Activated naive CD4-positive, alpha-beta T cell treated with anti-CD3 and anti-CD28 coated beads for 36 hours (primary cell): ENCODE measurements at regions of chr2 and their contacts with region 1.

Region 1: DNA sequence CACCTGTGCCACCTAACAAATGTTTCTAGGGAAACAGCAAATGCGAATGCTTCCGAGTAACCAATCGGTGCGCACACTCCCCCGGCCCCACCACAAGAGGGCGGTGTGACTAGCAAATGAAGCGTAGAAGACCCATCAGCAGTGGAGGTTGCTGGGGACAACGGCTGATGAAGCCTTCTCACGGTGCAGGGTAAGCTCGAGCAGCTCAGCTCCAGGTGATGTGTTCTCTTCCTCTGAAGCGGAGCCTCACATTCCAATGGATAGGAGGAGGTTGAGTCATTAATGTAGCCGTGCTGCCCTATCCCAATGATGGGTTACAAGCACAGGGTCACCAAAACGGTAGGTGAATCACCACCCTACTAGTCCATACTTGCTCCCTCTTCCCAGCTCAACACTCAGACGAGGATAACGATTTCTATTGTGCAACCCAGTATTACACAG is 127.6 kb upstream of the TWIST2 start:
- DNase-seq: peak; percentile 75
- H3K4me3 Mint-ChIP-seq: no peak overlapping the region
- H3K27ac Mint-ChIP-seq: no peak overlapping the region
- H3K4me1 Mint-ChIP-seq: no peaks in the 10 kb centered on the region
- H3K27me3 Mint-ChIP-seq: peaks cover 29% of the 10 kb centered on the region

Region 2: DNA sequence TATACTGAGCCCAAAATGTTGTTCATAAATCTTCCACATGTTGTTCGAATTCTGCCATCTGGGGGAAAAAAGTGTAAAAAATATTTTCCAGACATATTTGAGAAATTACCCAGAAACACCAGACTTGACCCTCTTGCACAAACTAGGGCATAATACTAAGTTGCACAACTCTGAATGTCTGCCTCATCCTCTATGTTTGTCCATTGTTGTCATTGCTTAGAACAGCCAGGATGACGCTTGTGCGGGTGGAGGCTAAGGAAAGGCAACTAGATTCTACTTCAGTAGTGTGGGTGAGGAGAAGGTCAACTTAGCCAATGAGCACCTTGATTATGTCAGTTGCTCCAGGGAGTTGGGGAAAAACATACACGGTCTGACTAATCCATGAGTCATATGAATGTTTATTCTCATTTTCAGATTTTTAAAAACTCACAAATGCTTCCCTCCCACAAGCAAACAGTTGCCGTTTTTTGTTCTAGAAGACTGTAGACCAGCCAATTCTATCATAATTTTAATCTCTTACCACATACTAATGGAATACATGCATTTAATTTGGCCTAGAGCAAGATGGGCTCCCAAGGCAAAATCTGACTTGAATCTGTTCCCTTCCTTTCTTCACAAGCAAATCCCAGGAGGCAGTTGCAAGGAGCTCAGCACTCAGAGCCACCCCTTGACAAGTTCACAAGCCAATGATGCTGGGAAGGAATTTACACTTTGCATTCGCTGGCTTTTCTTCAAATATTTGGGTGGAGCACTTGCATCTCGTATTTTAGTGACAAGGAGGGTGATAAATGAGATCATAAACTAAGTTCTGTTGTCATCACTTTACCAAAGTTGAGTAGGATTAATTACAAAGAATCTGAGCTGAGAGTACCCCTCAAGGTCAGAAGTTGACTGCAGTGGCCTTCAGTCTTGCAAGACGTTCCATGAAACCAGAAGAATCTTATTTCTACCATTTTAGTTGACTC is 35.6 kb before region 1 on chr2:
- CTCF ChIA-PET with region 1: no interaction called
- intact Hi-C with region 1: no loop called
- DNase-seq: peak; percentile 37
- H3K4me3 Mint-ChIP-seq: no peak overlapping the region
- H3K27ac Mint-ChIP-seq: no peak overlapping the region
- H3K4me1 Mint-ChIP-seq: peaks cover 13% of the 10 kb centered on the region
- H3K27me3 Mint-ChIP-seq: peaks cover 32% of the 10 kb centered on the region

Region 3: GRCh38 chr2:238970553-238971081 is 250.4 kb after region 1 on chr2:
- CTCF ChIA-PET with region 1: no interaction called
- intact Hi-C with region 1: loop called (anchors 2 kb)
- DNase-seq: peak; percentile 55
- H3K4me3 Mint-ChIP-seq: no peak overlapping the region
- H3K27ac Mint-ChIP-seq: no peak overlapping the region
- H3K4me1 Mint-ChIP-seq: no peaks in the 10 kb centered on the region
- H3K27me3 Mint-ChIP-seq: peaks cover 6% of the 10 kb centered on the region

Region 4: GRCh38 chr2:239002954-239003588 is 282.8 kb after region 1 on chr2:
- CTCF ChIA-PET with region 1: no interaction called
- intact Hi-C with region 1: no loop called
- DNase-seq: no peak
- H3K4me3 Mint-ChIP-seq: no peak overlapping the region
- H3K27ac Mint-ChIP-seq: no peak overlapping the region
- H3K4me1 Mint-ChIP-seq: no peaks in the 10 kb centered on the region
- H3K27me3 Mint-ChIP-seq: peaks cover 13% of the 10 kb centered on the region